ENCODE measurements at regions of chr19 and their contacts with region 1.

Region 1: GRCh38 chr19:45451131-45451849 is 16.5 kb upstream of the FOSB start:
- DNase-seq: no peak
- ATAC-seq: peak in 7 of 8 donors; percentile 3 to 25 (median 17)
- H3K4me3 ChIP-seq: peak overlapping the region; percentile 38 to 74 (median 64)
- H3K27ac ChIP-seq: peak overlapping the region; percentile 47 to 86 (median 82)
- H3K4me1 ChIP-seq: peaks cover 10 to 63% (median 32%) of the 10 kb centered on the region in 9 donors
- H3K27me3 ChIP-seq: no peaks in the 10 kb centered on the region
- CTCF ChIP-seq: no peak

Region 2: GRCh38 chr19:45404557-45405434 is 46.5 kb before region 1 on chr19 and contains the start of gene PPP1R13L:
- intact Hi-C with region 1: no loop called
- DNase-seq: peak; percentile 87 to 89
- ATAC-seq: peak; percentile 60 to 78 (median 74)
- H3K4me3 ChIP-seq: peak within 1 kb of the TSS; percentile 55 to 99 (median 72)
- H3K27ac ChIP-seq: peak within 1 kb of the TSS; percentile 86 to 97 (median 94)
- H3K4me1 ChIP-seq: peaks cover 7 to 60% (median 49%) of the 10 kb centered on the region in 9 donors
- H3K27me3 ChIP-seq: peaks cover 0 to 32% (median 0%) of the 10 kb centered on the region in 7 donors
- CTCF ChIP-seq: no peak
- total RNA-seq, gene PPP1R13L: 134 to 204 (median 166) TPM

Region 3: GRCh38 chr19:45469132-45469944 is 18.0 kb after region 1 on chr19:
- intact Hi-C with region 1: loop called in 2 of 10 experiments (anchors 2 kb)
- DNase-seq: peak; percentile 93 to 94
- ATAC-seq: peak; percentile 88 to 92 (median 90)
- H3K4me3 ChIP-seq: peak overlapping the region; percentile 45 to 82 (median 74)
- H3K27ac ChIP-seq: peak overlapping the region; percentile 88 to 98 (median 94)
- H3K4me1 ChIP-seq: peaks cover 8 to 46% (median 38%) of the 10 kb centered on the region in 9 donors
- H3K27me3 ChIP-seq: peaks cover 0 to 33% (median 0%) of the 10 kb centered on the region in 7 donors
- CTCF ChIP-seq: peak in 5 of 9 donors; percentile 1 to 20 (median 8)